ENCODE measurements at regions of chr20 and their contacts with region 1.

Region 1: GRCh38 chr20:50115591-50116372 is 2.8 kb upstream of the UBE2V1 start:
- DNase-seq: peak; percentile 96
- ATAC-seq: peak; percentile 81
- H3K4me3 Mint-ChIP-seq: peak overlapping the region; percentile 93
- H3K27ac Mint-ChIP-seq: peak overlapping the region; percentile 88
- H3K4me1 Mint-ChIP-seq: peaks cover 39% of the 10 kb centered on the region
- H3K27me3 Mint-ChIP-seq: no peaks in the 10 kb centered on the region

Region 2: GRCh38 chr20:48157718-48158419 is 1957.9 kb before region 1 on chr20:
- CTCF ChIA-PET with region 1: no interaction called
- POLR2A ChIA-PET with region 1: no interaction called
- intact Hi-C with region 1: no loop called
- DNase-seq: no peak
- ATAC-seq: no peak
- H3K4me3 Mint-ChIP-seq: no peak overlapping the region
- H3K27ac Mint-ChIP-seq: no peak overlapping the region
- H3K4me1 Mint-ChIP-seq: no peaks in the 10 kb centered on the region
- H3K27me3 Mint-ChIP-seq: peaks cover 12% of the 10 kb centered on the region

Region 3: DNA sequence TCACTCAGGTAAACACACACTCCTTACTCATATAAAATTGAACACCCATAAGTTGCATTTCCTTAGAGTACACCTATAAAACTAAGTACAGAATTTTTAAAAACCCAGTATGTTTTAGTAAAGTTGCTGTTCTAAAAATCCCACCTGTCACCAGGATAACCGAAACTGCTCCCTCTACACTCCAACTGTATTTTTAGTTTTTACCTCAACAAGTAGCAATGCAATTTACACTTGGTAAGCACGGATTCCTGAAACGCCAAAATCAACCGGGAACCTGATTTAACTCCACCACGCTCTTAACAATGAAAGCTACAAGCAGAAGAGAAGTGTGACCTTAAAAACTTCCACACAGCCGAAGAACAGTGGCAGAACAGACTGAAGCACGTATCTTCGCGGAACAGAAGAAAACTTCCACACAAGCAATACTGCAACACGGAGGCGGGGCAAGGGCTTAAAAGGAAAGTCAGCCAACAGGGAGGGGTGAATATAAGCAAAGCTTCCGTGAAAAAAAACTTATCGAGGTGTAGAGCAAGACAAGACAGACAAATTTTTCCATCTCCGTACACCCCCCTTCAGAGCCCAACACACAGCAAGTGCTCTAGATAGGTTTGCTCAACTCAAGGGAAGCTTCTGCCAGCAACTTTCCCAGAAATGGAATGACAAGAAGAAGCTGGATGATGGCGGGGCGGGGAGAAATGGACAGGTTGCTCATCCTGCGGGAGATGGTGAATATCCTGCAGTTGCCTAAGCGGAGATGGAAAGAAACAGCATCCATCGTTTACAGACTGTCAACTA is 929.0 kb before region 1 on chr20:
- CTCF ChIA-PET with region 1: no interaction called
- POLR2A ChIA-PET with region 1: no interaction called
- intact Hi-C with region 1: loop called in 1 of 2 experiments (anchors 10 kb)
- DNase-seq: peak; percentile 85
- ATAC-seq: peak; percentile 49
- H3K4me3 Mint-ChIP-seq: peak overlapping the region; percentile 96
- H3K27ac Mint-ChIP-seq: peak overlapping the region; percentile 89
- H3K4me1 Mint-ChIP-seq: peaks cover 51% of the 10 kb centered on the region
- H3K27me3 Mint-ChIP-seq: no peaks in the 10 kb centered on the region

Region 4: DNA sequence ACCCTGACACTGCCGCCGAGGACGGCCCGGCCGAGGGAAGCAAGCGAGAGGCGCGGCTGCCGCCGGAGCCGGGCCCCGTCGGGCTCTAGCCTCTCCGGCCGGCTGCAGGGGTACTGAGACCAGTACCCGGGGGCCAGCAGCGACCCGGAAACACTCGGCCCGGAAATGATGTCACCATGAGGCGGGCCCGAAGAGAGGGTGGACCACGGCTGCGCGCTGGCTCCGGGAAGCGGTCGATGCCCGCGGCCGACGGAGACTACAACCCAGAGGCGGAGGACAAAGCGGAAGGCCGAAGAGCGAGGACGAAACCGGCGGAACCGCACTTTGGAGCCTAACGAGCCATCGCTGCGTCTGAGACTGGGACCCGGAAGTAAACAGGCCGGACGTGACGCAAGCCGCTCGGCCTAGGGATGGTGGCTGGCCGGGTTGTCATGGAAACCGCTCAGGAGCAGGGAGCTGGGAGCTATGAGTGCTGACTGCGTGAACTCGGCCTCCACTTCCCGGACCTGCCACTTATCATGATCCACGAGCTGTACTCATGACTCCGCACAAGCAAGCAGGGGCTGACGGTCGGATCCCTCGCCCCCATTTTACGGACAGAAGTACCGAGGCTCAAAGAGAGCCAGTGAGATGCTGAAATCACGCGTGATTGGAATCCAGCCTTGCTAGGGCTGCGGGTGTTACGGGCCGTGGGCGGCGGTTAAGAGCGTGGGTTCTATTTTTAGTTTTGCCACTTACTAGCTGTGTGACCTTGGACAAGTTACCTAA is 200.2 kb before region 1 on chr20 and contains the start of gene SPATA2:
- CTCF ChIA-PET with region 1: no interaction called
- POLR2A ChIA-PET with region 1: no interaction called
- intact Hi-C with region 1: loop called in 1 of 2 experiments (anchors 1 kb)
- DNase-seq: peak; percentile 96
- ATAC-seq: peak; percentile 83
- H3K4me3 Mint-ChIP-seq: peak within 1 kb of the TSS; percentile 99
- H3K27ac Mint-ChIP-seq: peak within 1 kb of the TSS; percentile 100
- H3K4me1 Mint-ChIP-seq: peaks cover 27% of the 10 kb centered on the region
- H3K27me3 Mint-ChIP-seq: no peaks in the 10 kb centered on the region
- total RNA-seq, gene SPATA2: 8.7 to 10.1 TPM

Region 5: GRCh38 chr20:50101281-50101680 is 14.5 kb before region 1 on chr20:
- CTCF ChIA-PET with region 1: interaction called, 23 read pairs
- POLR2A ChIA-PET with region 1: interaction called, 6 read pairs
- intact Hi-C with region 1: no loop called
- DNase-seq: no peak
- ATAC-seq: no peak
- H3K4me3 Mint-ChIP-seq: no peak overlapping the region
- H3K27ac Mint-ChIP-seq: no peak overlapping the region
- H3K4me1 Mint-ChIP-seq: peaks cover 56% of the 10 kb centered on the region
- H3K27me3 Mint-ChIP-seq: no peaks in the 10 kb centered on the region

Region 6: GRCh38 chr20:50467718-50468356 is 352.1 kb after region 1 on chr20:
- CTCF ChIA-PET with region 1: interaction called, 3 read pairs
- POLR2A ChIA-PET with region 1: no interaction called
- intact Hi-C with region 1: loop called (anchors 5 kb)
- DNase-seq: peak; percentile 61
- ATAC-seq: peak; percentile 66
- H3K4me3 Mint-ChIP-seq: no peak overlapping the region
- H3K27ac Mint-ChIP-seq: no peak overlapping the region
- H3K4me1 Mint-ChIP-seq: peaks cover 18% of the 10 kb centered on the region
- H3K27me3 Mint-ChIP-seq: no peaks in the 10 kb centered on the region

Region 7: DNA sequence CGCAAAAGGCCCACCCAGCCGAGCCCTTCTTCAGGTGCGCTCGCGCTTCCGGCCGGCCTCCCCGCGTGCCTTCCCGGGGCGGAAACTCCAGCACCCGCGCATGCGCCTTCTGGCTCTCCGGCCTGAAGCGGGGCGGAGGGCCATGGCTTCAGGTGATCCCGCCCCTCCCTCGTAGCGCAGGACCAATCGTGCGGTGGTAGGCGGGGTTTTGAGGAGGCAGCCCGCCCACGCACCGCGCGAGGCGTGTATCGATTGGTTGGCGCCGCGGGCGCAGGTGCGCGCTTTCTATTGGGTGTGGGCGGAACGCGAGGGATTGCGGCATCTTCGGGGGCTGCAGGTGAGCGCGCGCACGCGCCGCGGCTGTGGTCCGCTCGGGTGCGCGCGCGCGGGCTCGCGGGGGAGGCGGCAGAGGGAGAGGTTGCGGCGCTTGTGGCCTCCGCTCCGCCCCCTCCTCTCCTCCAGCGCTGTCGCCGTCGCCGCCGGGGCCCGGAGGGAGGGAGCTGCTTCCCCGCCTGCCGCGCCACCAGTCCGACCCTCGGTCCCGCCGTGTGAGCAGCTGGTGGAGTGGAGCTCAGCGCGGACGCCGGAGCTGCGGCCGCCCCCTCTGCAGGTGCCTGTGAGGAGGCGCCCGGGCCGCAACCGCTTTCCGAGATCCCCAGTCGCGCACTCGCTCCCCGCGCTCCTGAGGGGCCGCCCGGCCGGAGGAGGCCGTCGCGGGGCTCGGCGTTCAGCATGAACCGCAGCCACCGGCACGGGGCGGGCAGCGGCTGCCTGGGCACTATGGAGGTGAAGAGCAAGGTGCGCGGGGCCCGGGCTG is 615.5 kb after region 1 on chr20 and contains the start of gene PARD6B:
- CTCF ChIA-PET with region 1: no interaction called
- POLR2A ChIA-PET with region 1: no interaction called
- intact Hi-C with region 1: loop called in 1 of 2 experiments (anchors 1 kb)
- DNase-seq: peak; percentile 100
- ATAC-seq: peak; percentile 92
- H3K4me3 Mint-ChIP-seq: peak within 1 kb of the TSS; percentile 85
- H3K27ac Mint-ChIP-seq: peak within 1 kb of the TSS; percentile 78
- H3K4me1 Mint-ChIP-seq: peaks cover 46% of the 10 kb centered on the region
- H3K27me3 Mint-ChIP-seq: no peaks in the 10 kb centered on the region
- total RNA-seq, gene PARD6B: 4.9 to 6.2 TPM